ENCODE measurements at regions of chr9 and their contacts with region 1.

Region 1: GRCh38 chr9:133960568-133961129 is 31.5 kb downstream of the VAV2 start:
- DNase-seq: no peak
- H3K4me3 ChIP-seq: no peak overlapping the region
- H3K27ac ChIP-seq: no peak overlapping the region
- H3K4me1 ChIP-seq: peaks cover 30% of the 10 kb centered on the region
- H3K27me3 ChIP-seq: no peaks in the 10 kb centered on the region
- CTCF ChIP-seq: no peak

Region 2: DNA sequence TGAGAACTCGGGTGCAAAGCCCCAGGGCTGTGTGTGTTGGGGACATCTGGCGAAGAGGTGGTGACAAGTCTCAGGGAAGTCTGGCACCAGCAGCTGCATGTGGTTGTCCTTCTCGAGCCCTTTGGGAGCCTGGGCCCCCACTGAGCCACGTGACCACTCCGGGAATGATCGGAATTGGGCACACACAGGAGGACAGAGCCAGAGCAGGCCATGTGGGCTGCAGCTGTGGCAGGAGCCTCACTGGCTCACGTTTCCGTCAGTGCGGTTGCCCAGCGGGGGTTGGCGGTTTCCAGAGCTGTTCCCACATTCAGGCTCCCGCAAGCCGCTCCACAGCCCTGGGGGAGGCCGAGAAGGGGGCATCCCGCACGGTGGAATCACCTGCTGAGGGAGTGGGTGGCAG is 905.7 kb before region 1 on chr9:
- CTCF ChIA-PET with region 1: no interaction called
- dilution Hi-C with region 1: no loop called
- in situ Hi-C with region 1: no loop called
- intact Hi-C with region 1: no loop called
- DNase-seq: no peak
- H3K4me3 ChIP-seq: no peak overlapping the region
- H3K27ac ChIP-seq: no peak overlapping the region
- H3K4me1 ChIP-seq: peaks cover 15% of the 10 kb centered on the region
- H3K27me3 ChIP-seq: no peaks in the 10 kb centered on the region
- CTCF ChIP-seq: no peak

Region 3: GRCh38 chr9:133910855-133911514 is 49.7 kb before region 1 on chr9:
- CTCF ChIA-PET with region 1: interaction called, 10 read pairs
- dilution Hi-C with region 1: no loop called
- in situ Hi-C with region 1: no loop called
- intact Hi-C with region 1: no loop called
- DNase-seq: peak; percentile 49
- H3K4me3 ChIP-seq: peak overlapping the region in 1 of 3 experiments; percentile 28
- H3K27ac ChIP-seq: peak overlapping the region; percentile 41
- H3K4me1 ChIP-seq: peaks cover 24% of the 10 kb centered on the region
- H3K27me3 ChIP-seq: no peaks in the 10 kb centered on the region
- CTCF ChIP-seq: no peak

Measured in mammary epithelial cell (primary cell).